Panc1 (cell line): ENCODE measurements at regions of chr6 and their contacts with region 1.

Region 1: DNA sequence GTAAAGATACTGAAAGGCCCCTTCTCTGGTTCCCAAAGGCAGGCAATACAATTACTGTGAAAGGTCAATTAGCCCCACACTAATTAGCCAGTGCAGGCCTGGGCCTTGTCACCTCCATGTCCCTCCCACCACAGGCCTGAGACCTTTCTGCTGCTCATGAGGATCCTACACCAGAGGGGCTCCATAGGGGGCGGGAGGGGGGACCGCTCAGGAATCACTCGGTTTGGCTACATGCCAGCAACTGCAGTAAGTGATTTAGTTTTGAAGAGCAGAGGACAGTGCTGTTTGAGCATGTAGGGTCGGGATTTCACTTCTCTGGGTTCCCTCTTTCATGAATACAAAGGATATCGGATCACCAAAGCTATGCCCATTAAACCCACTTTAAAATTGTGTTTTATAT is 455.6 kb downstream of the PRKN start:
- DNase-seq: no peak
- ATAC-seq: no peak
- H3K4me3 ChIP-seq: no peak overlapping the region
- H3K27ac ChIP-seq: no peak overlapping the region
- H3K4me1 ChIP-seq: no peaks in the 10 kb centered on the region
- H3K27me3 ChIP-seq: no peaks in the 10 kb centered on the region
- CTCF ChIP-seq: no peak

Region 2: DNA sequence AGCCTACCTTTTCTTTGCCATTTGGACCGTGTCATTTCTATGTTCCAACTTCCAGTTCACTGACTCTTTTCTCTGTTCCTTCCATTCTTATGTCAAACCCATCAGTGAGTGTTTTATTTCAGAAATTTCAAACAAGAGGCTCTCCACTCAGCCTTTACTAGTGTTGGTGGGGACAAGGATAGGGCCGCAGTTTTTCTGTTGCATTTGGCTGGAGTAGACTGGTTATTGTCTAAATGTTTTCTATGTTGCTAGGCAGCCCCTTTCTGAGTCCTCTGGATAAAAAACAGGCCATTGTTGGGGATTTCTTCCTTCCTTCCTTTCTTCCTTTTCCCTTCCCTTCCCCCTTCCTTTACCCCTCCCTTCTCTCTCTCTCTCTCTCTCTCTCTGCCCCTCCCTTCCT is 167.1 kb after region 1 on chr6:
- CTCF ChIA-PET with region 1: interaction called, 11 read pairs
- POLR2A ChIA-PET with region 1: no interaction called
- in situ Hi-C with region 1: no loop called
- intact Hi-C with region 1: no loop called
- DNase-seq: no peak
- ATAC-seq: no peak
- H3K4me3 ChIP-seq: no peak overlapping the region
- H3K27ac ChIP-seq: no peak overlapping the region
- H3K4me1 ChIP-seq: no peaks in the 10 kb centered on the region
- H3K27me3 ChIP-seq: no peaks in the 10 kb centered on the region
- CTCF ChIP-seq: no peak